BJ (cell line): ENCODE measurements at regions of chr12 and their contacts with region 1.

Region 1: GRCh38 chr12:44960856-44961255 is 84.7 kb upstream of the NELL2 start:
- DNase-seq: no peak
- H3K4me3 ChIP-seq: no peak overlapping the region
- H3K27me3 ChIP-seq: peaks cover 3% of the 10 kb centered on the region; the same call in 1 of the 2 replicates
- CTCF ChIP-seq: no peak

Region 2: GRCh38 chr12:44947163-44947562 is 13.7 kb before region 1 on chr12:
- CTCF ChIA-PET with region 1: interaction called, 16 read pairs
- POLR2A ChIA-PET with region 1: no interaction called
- DNase-seq: no peak
- H3K4me3 ChIP-seq: no peak overlapping the region
- H3K27me3 ChIP-seq: no peaks in the 10 kb centered on the region
- CTCF ChIP-seq: no peak